ENCODE measurements at regions of chr5 and their contacts with region 1.

Region 1: DNA sequence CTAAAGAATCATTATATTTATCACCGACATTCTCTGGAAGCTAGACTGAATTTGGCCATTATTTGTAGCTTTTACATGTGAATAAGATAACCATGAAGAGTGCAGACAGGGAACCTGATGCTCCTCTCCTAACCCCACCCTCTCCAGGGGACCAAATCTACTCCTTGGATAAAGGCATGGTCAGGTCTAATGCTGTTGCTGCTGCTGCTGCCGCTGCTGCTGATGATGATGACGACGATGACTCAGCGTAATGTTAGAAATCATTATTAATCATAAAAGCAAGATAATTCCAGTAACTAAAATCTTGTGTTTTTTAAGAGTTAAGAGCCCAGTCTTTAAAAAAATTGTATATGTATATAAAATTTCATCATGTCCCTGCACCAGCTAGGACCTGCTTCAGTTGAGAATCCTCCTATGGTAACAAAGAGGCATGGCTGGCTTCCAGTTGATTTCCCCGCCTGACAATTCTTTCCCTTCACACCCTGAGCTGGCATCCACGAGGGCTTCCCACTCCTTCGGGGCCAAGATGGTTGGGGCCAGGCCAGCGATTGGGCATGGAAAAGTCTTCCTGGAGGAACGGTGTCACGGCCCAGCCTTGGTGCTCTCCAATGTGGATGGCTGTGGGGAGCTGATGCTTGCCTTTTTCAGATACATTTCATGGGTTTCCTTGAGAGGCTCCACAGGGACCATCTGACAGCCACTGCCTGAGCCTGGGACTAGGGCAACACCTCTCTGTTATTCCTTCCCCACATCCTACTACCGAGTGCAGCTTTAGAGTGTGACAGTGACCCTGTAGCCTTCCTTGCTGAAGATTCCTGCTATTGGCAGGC is 400.0 kb downstream of the CTNND2 start:
- DNase-seq: no peak
- CTCF ChIP-seq: no peak

Region 2: GRCh38 chr5:11491404-11492075 is 12.7 kb before region 1 on chr5:
- CTCF ChIA-PET with region 1: interaction called, 25 read pairs
- POLR2A ChIA-PET with region 1: no interaction called
- DNase-seq: no peak
- CTCF ChIP-seq: no peak

Region 3: GRCh38 chr5:11602251-11602650 is 98.0 kb after region 1 on chr5:
- CTCF ChIA-PET with region 1: no interaction called
- POLR2A ChIA-PET with region 1: no interaction called
- DNase-seq: no peak
- CTCF ChIP-seq: no peak